Left ventricle myocardium superior (tissue), 1 donor: ENCODE measurements at regions of chr1 and their contacts with region 1.

Region 1: GRCh38 chr1:67041841-67042503 is 12.0 kb downstream of the SLC35D1 start:
- DNase-seq: no peak
- ATAC-seq: peak; percentile 60

Region 2: DNA sequence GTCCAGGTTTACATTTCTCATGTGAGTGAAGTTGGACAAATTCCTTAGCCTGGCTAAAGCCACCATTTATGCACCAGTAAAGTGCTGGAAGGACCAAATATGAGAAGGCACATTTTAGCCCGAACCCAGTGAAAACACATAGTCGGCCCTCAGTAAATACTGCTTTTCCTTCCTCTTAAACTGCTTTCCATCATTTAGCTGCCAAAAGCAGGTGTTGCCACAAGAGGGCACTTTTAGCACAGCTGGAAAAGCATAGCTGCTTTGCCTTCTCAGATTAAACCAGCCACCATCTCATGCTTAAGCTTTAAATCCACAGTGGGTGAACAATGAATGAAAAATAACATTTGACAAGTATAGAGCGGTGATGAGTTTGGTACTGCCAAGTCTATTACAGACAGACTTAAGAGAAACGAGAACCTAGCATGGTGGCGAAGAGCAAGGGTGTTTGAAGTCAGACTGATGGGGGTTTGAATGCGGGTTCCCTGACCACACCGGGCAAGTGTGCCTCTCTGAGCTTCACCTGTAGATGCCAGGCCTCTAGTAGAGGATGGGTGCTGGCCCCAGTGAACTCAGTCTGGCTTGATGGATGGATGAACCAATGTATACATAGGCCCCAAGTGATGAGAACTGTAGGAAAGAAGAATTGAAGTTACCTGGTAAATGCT is 45.8 kb before region 1 on chr1:
- intact Hi-C with region 1: loop called (anchors 10 kb)
- DNase-seq: peak; percentile 31
- ATAC-seq: peak; percentile 73

Region 3: GRCh38 chr1:67162957-67163356 is 121.0 kb after region 1 on chr1:
- intact Hi-C with region 1: no loop called
- DNase-seq: no peak
- ATAC-seq: no peak